HEK293T (cell line): ENCODE measurements at regions of chr17 and their contacts with region 1.

Region 1: DNA sequence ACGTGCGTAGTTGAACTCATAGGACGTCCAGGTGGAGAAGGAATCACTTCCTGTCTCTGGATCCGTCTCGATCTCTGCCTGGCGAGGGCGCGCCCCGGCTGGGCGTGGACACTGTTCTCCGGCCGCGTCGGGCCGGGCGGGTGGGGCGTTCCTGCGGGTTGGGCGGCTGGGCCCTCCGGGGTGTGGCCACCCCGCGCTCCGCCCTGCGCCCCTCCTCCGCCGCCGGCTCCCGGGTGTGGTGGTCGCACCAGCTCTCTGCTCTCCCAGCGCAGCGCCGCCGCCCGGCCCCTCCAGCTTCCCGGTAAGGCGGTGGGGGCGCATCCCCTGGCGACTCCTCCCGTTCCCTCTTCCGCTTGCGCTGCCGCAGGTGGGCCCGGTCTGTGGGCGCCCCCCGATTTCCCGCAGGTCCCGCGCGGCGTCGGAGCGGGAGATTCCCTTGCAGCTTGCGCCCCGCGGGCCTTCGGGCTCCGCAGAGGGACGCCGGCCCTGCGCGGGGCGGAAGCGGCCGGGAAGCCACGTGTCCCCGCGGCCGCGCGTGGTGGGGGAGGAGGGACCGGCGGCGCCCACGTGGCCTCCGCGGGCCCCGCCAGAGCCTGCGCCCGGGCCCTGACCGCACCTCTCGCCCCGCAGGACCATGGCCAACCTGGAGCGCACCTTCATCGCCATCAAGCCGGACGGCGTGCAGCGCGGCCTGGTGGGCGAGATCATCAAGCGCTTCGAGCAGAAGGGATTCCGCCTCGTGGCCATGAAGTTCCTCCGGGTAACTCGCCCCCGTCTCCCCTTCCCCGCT is at the start of gene NME2:
- DNase-seq: peak; percentile 92

Region 2: DNA sequence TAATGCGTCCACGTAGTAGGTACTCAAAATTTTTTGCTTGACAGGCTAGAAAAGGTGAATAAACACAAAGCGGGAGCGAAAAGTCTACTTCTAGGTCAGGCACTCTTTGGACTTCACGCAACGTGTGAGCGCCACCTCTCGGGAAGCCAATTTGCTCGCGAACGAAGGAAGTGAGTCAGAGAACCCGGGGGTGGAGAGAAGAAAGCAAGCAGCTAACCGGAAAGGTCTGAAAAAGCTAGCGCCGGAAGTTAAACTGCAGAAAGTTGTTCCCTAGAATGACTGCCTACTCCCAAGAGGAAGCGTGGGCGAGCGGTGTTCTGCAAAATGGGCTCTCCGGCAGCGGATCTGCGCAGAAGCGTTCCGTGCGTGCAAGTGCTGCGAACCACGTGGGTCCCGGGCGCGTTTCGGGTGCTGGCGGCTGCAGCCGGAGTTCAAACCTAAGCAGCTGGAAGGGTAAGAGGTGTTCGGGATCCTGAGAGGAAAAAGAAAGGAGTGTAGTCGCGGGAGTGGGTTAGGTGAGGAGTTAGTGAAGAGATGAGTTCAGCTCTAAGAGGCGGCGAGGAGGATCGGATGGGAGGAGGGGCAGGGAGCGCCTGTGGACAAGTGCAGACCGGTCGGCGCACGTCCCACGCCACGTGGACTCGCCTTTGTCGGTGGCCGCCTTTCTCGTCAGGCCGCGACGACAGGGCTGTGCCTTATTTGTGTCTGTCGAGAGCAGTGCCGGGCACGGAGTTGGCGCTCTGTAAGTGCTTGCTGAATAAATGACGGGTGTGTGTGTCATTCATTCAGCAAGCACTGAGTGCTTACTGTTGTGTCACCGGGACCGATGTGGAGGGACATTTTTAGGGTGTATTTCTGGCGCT is 13.0 kb before region 1 on chr17 and contains the start of gene NME1:
- CTCF ChIA-PET with region 1: interaction called, 4 read pairs
- POLR2A ChIA-PET with region 1: interaction called, 22 read pairs
- DNase-seq: peak; percentile 94

Region 3: DNA sequence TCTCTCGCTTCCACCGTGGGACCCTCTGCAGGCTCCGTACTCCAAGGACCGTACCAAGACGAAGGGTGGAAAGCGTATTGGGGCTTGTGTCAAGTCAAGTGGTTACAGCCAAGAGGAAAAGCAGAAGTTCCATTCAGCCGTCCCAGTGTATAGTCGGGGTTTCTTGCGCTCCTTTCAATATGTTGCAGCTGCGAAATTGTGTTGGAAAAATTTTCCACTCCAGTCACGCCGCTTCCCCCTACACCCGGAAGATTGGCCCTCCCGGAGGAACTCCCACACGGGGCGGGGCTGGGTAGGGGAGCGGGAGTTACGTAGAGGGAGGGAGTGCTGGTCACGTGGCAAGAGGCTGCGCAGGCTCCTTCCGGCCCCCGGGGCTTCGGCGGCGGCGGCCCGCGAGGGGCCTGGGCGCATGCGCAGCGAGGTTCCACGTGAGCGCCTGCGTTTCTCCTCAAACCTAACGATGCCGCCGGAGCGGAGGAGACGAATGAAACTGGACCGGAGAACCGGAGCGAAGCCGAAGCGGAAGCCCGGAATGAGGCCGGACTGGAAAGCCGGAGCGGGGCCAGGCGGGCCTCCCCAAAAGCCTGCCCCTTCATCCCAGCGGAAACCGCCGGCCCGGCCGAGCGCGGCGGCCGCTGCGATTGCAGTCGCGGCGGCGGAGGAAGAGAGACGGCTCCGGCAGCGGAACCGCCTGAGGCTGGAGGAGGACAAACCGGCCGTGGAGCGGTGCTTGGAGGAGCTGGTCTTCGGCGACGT is 93.9 kb after region 1 on chr17 and contains the start of gene UTP18:
- CTCF ChIA-PET with region 1: no interaction called
- POLR2A ChIA-PET with region 1: interaction called, 13 read pairs
- DNase-seq: peak; percentile 99